ENCODE measurements at regions of chr19 and their contacts with region 1.

Region 1: DNA sequence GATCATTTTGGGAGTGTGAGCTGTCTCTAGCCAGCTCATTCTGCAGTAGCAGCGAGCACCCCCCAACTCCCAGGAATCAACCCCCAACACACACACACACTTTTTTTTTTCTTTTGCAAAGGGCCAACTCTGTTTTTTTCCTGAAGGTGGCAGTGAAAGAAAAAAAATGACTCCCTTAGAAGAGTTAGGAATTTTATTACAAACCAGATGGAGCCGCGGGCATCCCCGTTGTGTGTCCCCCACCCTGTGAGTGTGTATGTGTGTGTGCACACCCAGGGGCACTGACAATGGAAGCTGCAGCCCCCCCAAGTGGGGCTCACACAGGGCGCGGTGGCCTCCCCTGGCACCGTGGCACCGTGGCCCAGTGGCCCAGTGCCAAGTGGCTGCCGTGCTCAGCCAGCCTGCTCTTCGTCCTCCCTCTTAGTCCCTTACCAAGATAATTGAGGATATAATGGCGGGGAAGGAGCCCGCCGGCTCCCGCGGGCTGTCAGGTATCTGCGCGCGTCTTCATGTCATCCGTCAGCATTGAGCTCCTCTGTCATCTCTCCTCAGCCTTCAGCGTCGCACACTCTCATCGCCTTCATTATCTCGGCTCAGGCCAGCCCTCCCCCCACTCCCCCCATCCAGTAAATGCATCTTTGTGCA is 314.1 kb downstream of the ZNF536 start:
- DNase-seq: no peak
- H3K4me3 ChIP-seq: no peak overlapping the region
- H3K27ac ChIP-seq: no peak overlapping the region
- H3K4me1 ChIP-seq: peaks cover 19% of the 10 kb centered on the region
- H3K27me3 ChIP-seq: no peaks in the 10 kb centered on the region
- CTCF ChIP-seq: no peak
- POLR2A ChIP-seq: no peak

Region 2: GRCh38 chr19:32224371-32225244 is 1538.3 kb after region 1 on chr19:
- intact Hi-C with region 1: loop called (anchors 5 kb)
- DNase-seq: peak; percentile 69
- H3K4me3 ChIP-seq: peak overlapping the region; percentile 26 to 56
- H3K27ac ChIP-seq: no peak overlapping the region
- H3K4me1 ChIP-seq: no peaks in the 10 kb centered on the region
- H3K27me3 ChIP-seq: no peaks in the 10 kb centered on the region
- CTCF ChIP-seq: peak; percentile 92 to 99 (median 97)
- POLR2A ChIP-seq: no peak

Measured in testis (tissue), 5 donors.